Activated naive CD8-positive, alpha-beta T cell treated with anti-CD3 and anti-CD28 coated beads, Interleukin-2, amount 10 ng/mL, durations not matched to agents 7 days and 5 days (primary cell): ENCODE measurements at regions of chr1 and their contacts with region 1.

Region 1: DNA sequence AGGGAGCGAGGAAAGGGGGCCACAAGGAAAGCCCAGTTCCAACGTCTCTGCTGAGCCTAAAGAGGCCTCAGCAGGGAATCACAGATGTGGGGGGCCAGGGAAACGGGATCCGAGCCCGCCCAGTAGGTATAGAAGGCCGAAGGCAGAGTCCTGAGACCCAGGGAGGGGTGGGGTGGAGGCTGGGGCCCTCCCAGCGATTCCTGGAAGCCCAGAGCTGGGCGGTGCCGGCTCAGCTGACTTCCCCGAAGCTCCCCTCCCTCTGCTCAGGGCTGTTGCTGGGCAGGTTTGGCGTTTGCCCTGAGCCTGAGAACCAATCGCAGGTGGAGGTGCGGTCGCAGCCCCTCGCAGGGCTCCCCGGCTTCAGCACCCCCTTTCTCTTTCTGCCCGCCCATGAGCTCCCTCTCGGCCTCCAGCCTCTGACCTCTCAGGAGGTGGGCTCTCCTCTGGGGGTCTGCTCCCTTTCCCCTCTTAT is 12.8 kb downstream of the ADAMTSL4 start:
- DNase-seq: peak; percentile 87
- ATAC-seq: peak; percentile 61
- H3K4me3 Mint-ChIP-seq: peak overlapping the region; percentile 97
- H3K27ac Mint-ChIP-seq: peak overlapping the region; percentile 100
- H3K4me1 Mint-ChIP-seq: peaks cover 43% of the 10 kb centered on the region
- H3K27me3 Mint-ChIP-seq: no peaks in the 10 kb centered on the region

Region 2: GRCh38 chr1:150613061-150613920 is 51.3 kb after region 1 on chr1:
- POLR2A ChIA-PET with region 1: interaction called, 71 read pairs
- DNase-seq: no peak
- ATAC-seq: peak; percentile 48
- H3K4me3 Mint-ChIP-seq: peak overlapping the region; percentile 55
- H3K27ac Mint-ChIP-seq: peak overlapping the region; percentile 83
- H3K4me1 Mint-ChIP-seq: peaks cover 49% of the 10 kb centered on the region
- H3K27me3 Mint-ChIP-seq: no peaks in the 10 kb centered on the region

Region 3: DNA sequence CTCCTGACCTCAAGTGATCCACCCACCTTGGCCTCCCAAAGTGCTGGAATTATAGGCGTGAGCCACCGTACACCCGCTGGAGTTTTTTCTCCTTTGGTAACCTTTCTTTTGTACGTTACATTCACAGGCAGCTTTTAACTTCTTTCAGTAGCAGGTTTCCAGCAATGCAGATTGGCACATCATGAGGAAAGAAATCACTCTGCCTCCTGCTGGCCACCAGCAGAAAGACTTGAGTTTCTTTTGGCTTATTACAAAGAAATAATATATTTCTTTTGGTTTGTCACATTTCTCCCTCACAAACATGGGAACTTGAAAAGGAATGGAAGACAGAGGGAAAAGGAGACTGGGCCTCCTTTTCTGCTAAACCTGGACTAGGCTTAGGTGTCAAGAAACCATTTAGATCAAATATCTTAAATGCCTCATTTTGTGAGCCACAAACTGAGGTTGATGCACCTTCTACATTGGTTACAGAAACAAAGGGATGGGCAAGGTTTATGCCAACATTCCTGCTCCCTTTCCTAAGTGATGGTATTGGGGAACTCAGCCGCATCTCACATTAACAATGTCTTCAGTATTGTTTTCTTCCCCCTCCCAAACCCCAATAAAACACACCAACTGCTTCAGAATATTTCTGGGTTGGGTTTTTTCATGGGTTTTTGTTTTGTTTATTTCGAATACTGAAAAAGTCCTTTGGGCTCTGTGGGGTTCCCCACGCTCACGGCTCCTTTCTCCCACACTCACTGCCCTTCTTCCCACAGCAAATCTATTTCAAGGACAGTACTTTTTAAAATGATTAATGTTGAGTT is 59.7 kb after region 1 on chr1:
- POLR2A ChIA-PET with region 1: interaction called, 71 read pairs
- DNase-seq: peak; percentile 52
- ATAC-seq: peak; percentile 45
- H3K4me3 Mint-ChIP-seq: no peak overlapping the region
- H3K27ac Mint-ChIP-seq: peak overlapping the region; percentile 81
- H3K4me1 Mint-ChIP-seq: peaks cover 34% of the 10 kb centered on the region
- H3K27me3 Mint-ChIP-seq: no peaks in the 10 kb centered on the region